ENCODE measurements at regions of chr17 and their contacts with region 1.

Region 1: DNA sequence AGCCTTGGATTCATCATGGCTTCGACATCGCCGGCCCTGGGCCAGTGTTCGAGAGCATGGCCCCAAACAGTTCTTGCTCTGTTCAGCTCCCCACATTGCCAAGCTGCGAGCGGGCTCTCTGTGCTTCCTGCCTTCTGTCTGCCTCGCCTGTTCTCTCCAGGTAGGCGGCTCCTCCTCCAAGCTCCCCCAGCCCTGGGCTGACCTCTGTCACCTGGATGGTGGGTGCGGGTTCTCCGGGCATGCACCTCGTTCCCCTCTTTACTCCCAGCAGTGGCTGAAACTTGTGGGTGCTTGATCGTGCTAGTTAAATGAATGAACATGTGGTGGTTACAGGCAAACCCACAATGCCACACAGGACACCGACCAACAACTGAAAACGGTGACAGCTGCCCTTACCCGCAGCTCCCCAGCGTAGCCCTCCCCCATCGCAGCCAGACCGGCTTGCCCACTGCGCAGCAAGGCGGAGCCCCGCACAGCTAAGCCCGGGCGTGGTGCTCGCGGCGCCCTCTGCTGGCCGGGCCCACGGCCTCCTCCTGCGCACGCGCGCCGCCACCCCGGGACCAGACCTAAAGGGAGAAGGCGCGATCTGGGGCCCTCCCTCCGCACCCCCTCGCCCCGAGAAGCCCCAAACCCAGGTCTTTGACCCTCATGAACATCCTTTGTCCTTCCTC is 23.0 kb upstream of the EIF1 start:
- ATAC-seq: peak; percentile 80 to 86 (median 84)
- H3K4me3 ChIP-seq: peak overlapping the region; percentile 16 to 28 (median 27)
- H3K27ac ChIP-seq: peak overlapping the region; percentile 92 to 96
- H3K4me1 ChIP-seq: peaks cover 10 to 17% of the 10 kb centered on the region in 2 donors

Region 2: GRCh38 chr17:40615295-40615988 is 1050.3 kb before region 1 on chr17:
- in situ Hi-C with region 1: loop called in 3 of 9 experiments (anchors 25 kb)
- ATAC-seq: peak in 4 of 8 experiments; percentile 32 to 85 (median 66)
- H3K4me3 ChIP-seq: no peak overlapping the region
- H3K27ac ChIP-seq: no peak overlapping the region
- H3K4me1 ChIP-seq: no peaks in the 10 kb centered on the region

Region 3: DNA sequence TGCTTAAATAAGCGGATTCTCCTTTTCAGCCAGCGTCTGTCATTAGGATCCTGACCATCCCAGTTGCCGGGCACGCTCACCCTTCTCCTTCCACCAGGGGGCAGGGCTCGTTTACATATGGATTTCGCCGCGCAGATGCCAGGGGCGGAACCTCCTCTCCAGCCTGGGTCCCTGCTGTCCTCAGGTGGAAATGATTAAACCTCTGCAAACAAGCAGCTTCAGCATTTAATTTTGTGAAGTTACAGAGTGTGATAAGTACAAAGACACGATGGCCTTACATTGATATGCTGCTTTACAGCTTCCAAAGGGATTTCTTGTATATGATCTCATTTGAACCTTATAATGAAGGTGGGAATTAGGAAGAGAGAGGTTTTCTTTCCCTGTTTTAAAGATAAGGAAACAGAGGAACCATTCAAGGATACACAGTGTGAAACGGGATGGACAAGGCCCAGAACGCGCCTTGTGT is 862.1 kb before region 1 on chr17:
- in situ Hi-C with region 1: loop called in 4 of 9 experiments (anchors 10 to 25 kb)
- ATAC-seq: peak; percentile 87 to 97 (median 94)
- H3K4me3 ChIP-seq: no peak overlapping the region
- H3K27ac ChIP-seq: no peak overlapping the region
- H3K4me1 ChIP-seq: no peaks in the 10 kb centered on the region

Region 4: GRCh38 chr17:40818733-40819527 is 846.8 kb before region 1 on chr17:
- in situ Hi-C with region 1: loop called in 4 of 9 experiments (anchors 10 to 25 kb)
- ATAC-seq: peak; percentile 92 to 98 (median 95)
- H3K4me3 ChIP-seq: peak overlapping the region; percentile 47 to 60 (median 55)
- H3K27ac ChIP-seq: peak overlapping the region; percentile 87 to 92
- H3K4me1 ChIP-seq: peaks cover 7 to 23% of the 10 kb centered on the region in 2 donors

Region 5: DNA sequence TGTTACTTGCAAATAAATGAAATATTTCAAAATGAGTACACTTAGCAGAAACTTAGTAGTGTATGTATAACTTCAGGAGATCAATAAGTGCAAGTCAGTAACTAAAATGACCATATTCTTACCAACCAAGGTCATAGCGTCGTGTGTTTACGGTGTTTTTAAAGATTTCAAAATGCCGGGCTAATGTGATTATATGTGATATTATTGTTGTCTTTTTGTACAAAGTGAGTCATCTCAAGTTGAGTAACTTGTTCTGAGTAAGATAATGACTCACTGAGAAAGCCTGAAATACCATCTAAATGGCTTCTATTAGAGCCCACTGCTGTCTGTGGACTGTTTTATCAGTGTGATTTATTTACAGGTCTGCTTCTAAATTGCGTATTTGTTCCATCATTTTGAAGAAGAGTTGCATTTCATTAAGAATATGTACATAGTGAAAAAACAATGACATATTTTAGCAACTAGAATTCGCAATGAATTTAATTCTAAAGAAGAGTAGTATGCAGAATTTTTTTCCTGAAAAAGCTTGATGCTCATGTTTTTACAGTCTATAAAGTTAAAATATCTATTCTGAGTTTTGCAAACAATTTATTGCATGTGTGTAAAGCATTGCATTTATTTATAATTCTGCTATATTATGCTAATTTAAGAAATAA is 811.4 kb before region 1 on chr17:
- in situ Hi-C with region 1: loop called in 1 of 9 experiments (anchors 25 kb)
- ATAC-seq: peak; percentile 48 to 98 (median 76)
- H3K4me3 ChIP-seq: no peak overlapping the region
- H3K27ac ChIP-seq: no peak overlapping the region
- H3K4me1 ChIP-seq: peaks cover 0 to 2% of the 10 kb centered on the region in 2 donors

Region 6: GRCh38 chr17:40909351-40909750 is 756.4 kb before region 1 on chr17:
- in situ Hi-C with region 1: loop called in 7 of 9 experiments (anchors 5 to 25 kb)
- ATAC-seq: peak; percentile 83 to 99 (median 98)
- H3K4me3 ChIP-seq: no peak overlapping the region
- H3K27ac ChIP-seq: no peak overlapping the region
- H3K4me1 ChIP-seq: peaks cover 4 to 17% of the 10 kb centered on the region in 2 donors

Region 7: DNA sequence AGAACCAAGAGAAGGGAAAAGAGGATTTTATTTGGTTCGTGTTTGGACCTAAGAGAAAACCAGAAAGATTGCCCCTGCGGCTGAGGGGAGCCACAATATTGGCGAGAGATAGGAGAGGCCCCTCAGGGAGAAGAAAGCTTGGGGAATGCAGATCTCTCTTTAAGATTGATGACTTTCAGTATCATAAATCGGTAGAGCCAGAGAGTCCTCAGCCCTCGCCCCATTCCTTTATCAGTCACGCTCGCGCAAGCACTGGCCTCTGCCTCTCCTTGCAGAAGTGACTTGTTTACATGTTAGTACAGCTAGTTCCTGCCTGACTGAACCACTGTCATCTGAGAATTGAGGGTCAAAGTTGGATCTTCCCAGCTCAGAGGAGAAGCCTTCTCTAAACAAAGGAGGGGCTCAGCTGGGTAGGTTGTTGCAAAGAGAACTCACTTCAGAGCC is 116.1 kb before region 1 on chr17:
- in situ Hi-C with region 1: loop called in 2 of 9 experiments (anchors 25 kb)
- ATAC-seq: no peak
- H3K4me3 ChIP-seq: no peak overlapping the region
- H3K27ac ChIP-seq: no peak overlapping the region
- H3K4me1 ChIP-seq: peaks cover 10 to 14% of the 10 kb centered on the region in 2 donors

Measured in motor neuron (in vitro differentiated cells).